ENCODE measurements at regions of chr14 and their contacts with region 1.

Region 1: DNA sequence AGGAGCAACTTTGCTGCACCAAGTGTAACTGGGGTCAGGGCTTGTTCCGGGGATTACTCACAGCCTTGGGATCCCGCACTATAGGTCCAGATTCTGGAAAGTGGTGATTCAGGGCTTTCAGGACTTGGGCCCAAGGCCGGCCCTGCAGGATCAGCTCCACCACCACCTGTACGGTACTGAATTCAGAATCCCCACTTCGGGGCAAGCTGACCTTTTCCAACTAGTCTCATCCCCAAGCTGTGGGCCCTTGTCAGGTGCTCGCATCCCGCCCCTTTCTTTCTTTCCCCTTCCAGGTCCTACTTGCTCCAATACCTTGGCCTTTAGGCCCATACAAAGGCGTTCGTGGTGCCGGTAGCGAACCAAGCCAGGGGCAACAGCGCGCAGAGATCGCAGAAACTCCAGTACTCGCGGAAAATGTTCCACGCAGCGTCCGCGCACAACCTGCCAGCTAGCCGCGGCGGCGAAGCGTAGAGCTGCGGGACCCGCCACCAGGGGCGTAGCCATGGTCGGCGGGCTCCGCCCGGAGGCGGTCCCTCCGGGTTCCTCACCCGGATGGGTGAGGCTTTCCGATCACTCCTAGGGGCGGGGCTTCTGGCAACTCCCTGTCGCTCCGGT is 487 bp downstream of the TINF2 start:
- DNase-seq: peak; percentile 97
- CTCF ChIP-seq: peak; percentile 11

Region 2: GRCh38 chr14:24067145-24068082 is 174.5 kb before region 1 on chr14:
- CTCF ChIA-PET with region 1: no interaction called
- POLR2A ChIA-PET with region 1: no interaction called
- DNase-seq: no peak
- CTCF ChIP-seq: no peak

Region 3: DNA sequence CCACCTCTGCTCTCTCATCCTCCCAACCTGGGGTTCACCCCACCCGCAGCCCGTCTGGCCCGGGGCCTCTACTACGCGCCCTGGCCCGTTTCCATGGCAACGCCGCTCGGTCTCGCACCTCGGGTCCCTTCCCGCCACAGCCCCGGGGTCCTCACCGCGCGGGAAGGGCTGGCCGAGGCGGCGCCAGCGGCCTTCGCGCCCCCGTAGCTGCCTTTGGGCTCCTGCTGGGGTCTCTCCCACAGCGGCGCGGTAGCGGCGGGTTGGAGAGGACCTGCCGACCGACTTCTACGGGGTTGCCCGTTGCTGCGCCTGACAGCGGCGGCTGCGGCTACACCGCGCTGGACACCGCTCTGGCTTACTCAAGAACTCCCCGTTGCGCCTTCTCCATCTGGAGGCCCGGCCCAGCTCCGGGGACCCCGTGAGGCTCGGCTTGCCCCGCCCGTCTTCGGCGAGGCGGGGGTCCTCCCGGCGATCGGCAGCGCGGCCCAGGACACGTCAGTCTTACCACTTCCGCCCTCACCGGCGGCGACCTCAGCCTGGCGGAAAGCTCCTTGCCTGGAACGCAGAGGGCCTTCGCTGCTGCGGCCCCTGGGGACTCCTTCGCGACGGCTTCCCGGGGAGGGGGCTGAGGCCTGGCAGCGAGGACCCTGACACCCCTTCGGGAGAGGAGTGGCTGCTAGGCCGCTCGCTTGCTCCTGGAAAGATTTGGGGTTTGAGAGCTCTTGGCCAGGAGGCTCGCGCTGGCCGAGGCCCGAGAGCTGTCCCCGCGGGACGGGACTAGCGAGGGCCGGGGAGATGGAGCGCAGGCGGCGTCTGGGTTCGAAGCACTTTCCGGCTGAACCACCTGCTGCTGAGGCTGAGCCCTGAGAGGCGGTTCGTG is 46.5 kb before region 1 on chr14 and contains the start of gene TM9SF1:
- CTCF ChIA-PET with region 1: no interaction called
- POLR2A ChIA-PET with region 1: interaction called, 13 read pairs
- DNase-seq: peak; percentile 94
- CTCF ChIP-seq: no peak

Region 4: GRCh38 chr14:24215495-24216344 is 26.2 kb before region 1 on chr14 and contains the start of gene MDP1:
- CTCF ChIA-PET with region 1: interaction called, 28 read pairs
- POLR2A ChIA-PET with region 1: interaction called, 7 read pairs
- DNase-seq: peak; percentile 91
- CTCF ChIP-seq: peak; percentile 97

Region 5: DNA sequence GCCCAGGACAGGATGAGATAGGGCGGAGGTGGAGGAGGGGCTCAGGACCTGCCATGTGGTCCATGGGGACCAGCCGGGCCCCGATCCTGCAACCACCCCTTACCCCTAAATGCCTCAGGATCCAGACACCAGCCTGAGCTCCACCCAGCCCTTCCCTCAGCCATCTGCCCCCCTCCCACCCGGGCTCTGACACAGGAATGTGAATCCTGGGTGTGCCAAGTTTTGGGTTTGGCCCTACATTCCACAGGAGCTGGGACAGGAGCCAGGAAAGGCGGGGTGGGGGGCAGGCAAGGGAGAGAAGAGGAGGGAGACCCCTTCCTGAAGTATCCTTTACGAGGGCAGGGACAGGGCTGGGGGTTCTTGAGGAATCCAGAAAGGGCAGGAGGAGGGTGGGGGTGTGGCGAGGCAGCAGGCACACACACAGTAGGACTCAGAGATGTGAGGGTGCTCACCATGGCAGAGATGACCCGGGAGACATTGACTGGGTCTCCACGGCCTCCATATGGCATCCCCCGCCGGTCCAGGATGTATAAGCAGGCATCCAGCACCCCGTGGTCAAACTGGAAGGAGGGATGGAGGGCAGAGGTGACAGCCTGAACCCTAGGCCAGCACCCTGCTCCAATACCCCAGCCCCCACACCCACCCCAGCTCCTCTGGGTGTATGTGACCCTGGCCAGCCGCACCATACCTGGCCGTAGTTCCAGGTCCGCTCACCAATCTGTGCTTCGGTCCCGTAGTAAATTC is 17.5 kb after region 1 on chr14:
- CTCF ChIA-PET with region 1: interaction called, 12 read pairs
- POLR2A ChIA-PET with region 1: no interaction called
- DNase-seq: no peak
- CTCF ChIP-seq: no peak

Region 6: DNA sequence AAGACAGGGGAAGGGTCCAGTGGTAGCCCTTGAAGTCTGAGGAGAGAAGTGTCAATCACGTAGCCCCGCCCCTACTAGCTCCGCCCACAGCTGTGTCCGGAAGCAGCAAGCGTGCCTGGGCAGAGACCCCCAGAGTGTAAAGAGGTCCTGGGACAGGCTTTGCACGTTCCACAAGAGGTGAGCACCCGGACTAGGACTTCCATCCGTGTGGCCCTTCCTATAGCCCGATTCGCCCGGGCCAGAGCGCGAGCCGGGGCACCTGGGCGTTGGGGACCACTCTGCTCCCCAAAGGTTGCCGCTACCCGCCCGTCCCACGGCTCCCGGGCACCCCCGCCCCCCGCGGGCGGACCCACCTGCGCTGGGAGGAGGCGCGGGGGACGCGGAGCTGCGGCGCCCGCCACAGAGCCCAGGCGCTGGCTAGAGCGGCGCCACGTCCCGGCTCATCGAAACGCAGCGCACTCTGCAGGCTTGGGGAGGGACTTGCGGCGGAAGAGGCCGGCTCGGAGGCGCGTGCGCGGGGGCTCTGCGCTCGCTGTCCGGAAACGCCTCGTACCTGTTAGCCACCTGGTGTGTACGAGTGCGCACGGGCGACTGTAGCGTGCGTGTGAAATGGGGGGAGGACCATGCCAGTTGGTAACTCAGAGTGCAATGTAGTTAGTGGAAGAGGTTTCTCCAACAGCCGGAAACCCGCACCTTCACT is 29.3 kb after region 1 on chr14 and contains the start of gene RABGGTA:
- CTCF ChIA-PET with region 1: interaction called, 40 read pairs
- POLR2A ChIA-PET with region 1: interaction called, 13 read pairs
- DNase-seq: peak; percentile 96
- CTCF ChIP-seq: peak; percentile 88

Region 7: GRCh38 chr14:24279301-24280186 is 37.6 kb after region 1 on chr14:
- CTCF ChIA-PET with region 1: interaction called, 26 read pairs
- POLR2A ChIA-PET with region 1: interaction called, 12 read pairs
- DNase-seq: peak; percentile 50
- CTCF ChIP-seq: peak; percentile 11